ENCODE measurements at regions of chr20 and their contacts with region 1.

Region 1: GRCh38 chr20:478949-479429 is 16.7 kb upstream of the TBC1D20 start:
- DNase-seq: peak; percentile 66
- CTCF ChIP-seq: peak; percentile 58

Region 2: GRCh38 chr20:354298-355064 is 124.5 kb before region 1 on chr20:
- in situ Hi-C with region 1: loop called (anchors 10 kb)
- DNase-seq: peak; percentile 91
- CTCF ChIP-seq: peak; percentile 95